ENCODE measurements at regions of chrX and their contacts with region 1.

Region 1: GRCh38 chrX:44989995-44990770 is 117.2 kb downstream of the KDM6A start:
- DNase-seq: no peak
- ATAC-seq: no peak
- H3K4me3 ChIP-seq: no peak overlapping the region
- H3K4me3 Mint-ChIP-seq: no peak overlapping the region
- H3K27ac ChIP-seq: no peak overlapping the region
- H3K27ac Mint-ChIP-seq: no peak overlapping the region
- H3K4me1 ChIP-seq: peaks cover 2 to 6% of the 10 kb centered on the region in 2 donors
- H3K4me1 Mint-ChIP-seq: peaks cover 28% of the 10 kb centered on the region
- H3K27me3 ChIP-seq: no peaks in the 10 kb centered on the region
- H3K27me3 Mint-ChIP-seq: no peaks in the 10 kb centered on the region
- CTCF ChIP-seq: no peak

Region 2: DNA sequence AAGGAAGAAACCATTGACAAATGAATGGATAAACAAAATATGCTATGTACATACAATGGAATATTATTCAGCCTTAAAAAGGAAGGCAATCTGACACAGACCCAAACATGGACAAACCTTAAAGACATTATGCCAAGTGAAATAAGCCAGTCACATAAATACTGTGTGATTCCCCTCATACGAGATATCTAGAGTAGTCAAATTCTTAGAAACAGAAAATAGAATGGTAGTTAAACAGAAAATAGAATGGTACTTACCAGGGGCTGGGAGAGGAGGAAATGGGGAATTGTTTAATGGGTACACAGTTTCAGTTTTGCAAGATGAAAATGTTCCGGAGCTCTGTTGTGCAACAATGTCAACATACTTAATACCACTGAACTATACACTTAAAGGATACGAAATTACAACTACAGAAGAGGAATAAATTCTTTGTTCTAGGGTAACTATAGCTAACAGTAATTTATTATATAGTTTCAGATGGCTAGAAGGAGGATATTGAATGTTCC is 194.2 kb before region 1 on chrX:
- CTCF ChIA-PET with region 1: no interaction called
- POLR2A ChIA-PET with region 1: no interaction called
- intact Hi-C with region 1: no loop called
- DNase-seq: no peak
- ATAC-seq: no peak
- H3K4me3 ChIP-seq: no peak overlapping the region
- H3K4me3 Mint-ChIP-seq: no peak overlapping the region
- H3K27ac ChIP-seq: no peak overlapping the region
- H3K27ac Mint-ChIP-seq: no peak overlapping the region
- H3K4me1 ChIP-seq: no peaks in the 10 kb centered on the region
- H3K4me1 Mint-ChIP-seq: no peaks in the 10 kb centered on the region
- H3K27me3 ChIP-seq: no peaks in the 10 kb centered on the region
- H3K27me3 Mint-ChIP-seq: no peaks in the 10 kb centered on the region
- CTCF ChIP-seq: no peak

Region 3: GRCh38 chrX:44958480-44958879 is 31.7 kb before region 1 on chrX:
- CTCF ChIA-PET with region 1: no interaction called
- POLR2A ChIA-PET with region 1: no interaction called
- intact Hi-C with region 1: loop called (anchors 5 kb)
- DNase-seq: no peak
- ATAC-seq: no peak
- H3K4me3 ChIP-seq: no peak overlapping the region
- H3K4me3 Mint-ChIP-seq: no peak overlapping the region
- H3K27ac ChIP-seq: no peak overlapping the region
- H3K27ac Mint-ChIP-seq: no peak overlapping the region
- H3K4me1 ChIP-seq: peaks cover 0 to 13% of the 10 kb centered on the region in 2 donors
- H3K4me1 Mint-ChIP-seq: peaks cover 46% of the 10 kb centered on the region
- H3K27me3 ChIP-seq: no peaks in the 10 kb centered on the region
- H3K27me3 Mint-ChIP-seq: no peaks in the 10 kb centered on the region
- CTCF ChIP-seq: no peak

Region 4: DNA sequence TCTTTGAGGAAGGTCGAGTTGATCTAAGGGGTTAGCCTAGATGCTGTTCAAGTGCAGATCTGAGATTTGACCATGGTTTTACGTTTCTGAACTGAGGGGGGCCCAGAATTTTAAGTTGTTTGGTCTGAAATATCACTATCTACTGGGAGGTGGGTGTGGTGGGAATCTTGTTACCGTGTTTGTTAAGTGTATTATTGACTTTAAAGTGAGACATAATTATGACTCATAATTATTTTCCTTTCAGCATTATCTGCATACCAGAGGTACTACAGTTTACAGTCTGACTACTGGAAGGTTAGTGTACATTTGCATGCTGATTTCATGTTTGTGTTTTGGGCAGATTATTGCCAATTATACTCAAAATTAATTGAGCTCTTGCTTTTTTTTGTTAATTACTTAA is 15.8 kb before region 1 on chrX:
- CTCF ChIA-PET with region 1: no interaction called
- POLR2A ChIA-PET with region 1: no interaction called
- intact Hi-C with region 1: no loop called
- DNase-seq: no peak
- ATAC-seq: no peak
- H3K4me3 ChIP-seq: no peak overlapping the region
- H3K4me3 Mint-ChIP-seq: no peak overlapping the region
- H3K27ac ChIP-seq: no peak overlapping the region
- H3K27ac Mint-ChIP-seq: no peak overlapping the region
- H3K4me1 ChIP-seq: no peaks in the 10 kb centered on the region
- H3K4me1 Mint-ChIP-seq: peaks cover 11% of the 10 kb centered on the region
- H3K27me3 ChIP-seq: no peaks in the 10 kb centered on the region
- H3K27me3 Mint-ChIP-seq: no peaks in the 10 kb centered on the region
- CTCF ChIP-seq: no peak